Right ventricle myocardium superior (tissue), 1 donor: ENCODE measurements at regions of chr15 and their contacts with region 1.

Region 1: GRCh38 chr15:23642413-23643044 is 5.1 kb downstream of the MAGEL2 start:
- DNase-seq: peak; percentile 52
- ATAC-seq: peak; percentile 77

Region 2: GRCh38 chr15:23483821-23484299 is 158.7 kb before region 1 on chr15:
- intact Hi-C with region 1: no loop called
- DNase-seq: no peak
- ATAC-seq: peak; percentile 78

Region 3: GRCh38 chr15:23877502-23878412 is 235.2 kb after region 1 on chr15:
- intact Hi-C with region 1: loop called (anchors 5 kb)
- DNase-seq: no peak
- ATAC-seq: peak; percentile 66